Mammary epithelial cell (primary cell): ENCODE measurements at regions of chr10 and their contacts with region 1.

Region 1: DNA sequence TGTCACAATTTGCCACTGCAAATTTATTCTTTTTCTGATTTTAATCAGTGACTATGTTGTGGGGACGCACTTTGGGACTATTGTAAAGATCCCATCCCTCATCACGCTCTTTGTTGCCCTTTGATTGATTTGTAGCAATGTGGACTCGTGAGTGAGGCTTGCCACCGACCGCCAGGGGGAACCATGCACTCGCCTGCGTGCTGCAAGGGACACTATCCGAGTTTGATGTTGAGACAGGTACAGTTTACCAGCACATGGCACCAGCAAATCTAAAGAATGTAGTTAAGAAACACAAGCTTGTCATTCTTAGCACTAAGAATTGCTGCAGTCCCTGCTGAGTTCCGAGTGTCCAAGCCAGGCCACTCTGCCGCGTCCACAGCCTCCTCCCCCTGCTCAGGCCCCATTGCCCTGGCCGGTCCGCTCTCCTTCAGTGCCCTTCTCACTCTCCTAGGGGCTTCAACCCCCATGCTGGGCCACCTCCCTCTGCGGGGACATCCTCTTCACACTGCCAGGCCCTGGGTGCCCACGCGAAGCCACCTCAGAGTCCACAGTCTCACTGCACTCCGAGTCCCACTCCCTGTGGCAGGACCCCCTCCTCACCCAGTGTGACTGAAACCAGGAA is 2.0 kb upstream of the SFTPA2 start:
- DNase-seq: peak; percentile 27
- H3K4me3 ChIP-seq: no peak overlapping the region
- H3K27ac ChIP-seq: no peak overlapping the region
- H3K4me1 ChIP-seq: no peaks in the 10 kb centered on the region
- H3K27me3 ChIP-seq: peaks cover 1% of the 10 kb centered on the region
- CTCF ChIP-seq: peak; percentile 89 to 94

Region 2: GRCh38 chr10:79588800-79589199 is 26.6 kb after region 1 on chr10:
- CTCF ChIA-PET with region 1: no interaction called
- dilution Hi-C with region 1: no loop called
- in situ Hi-C with region 1: no loop called
- intact Hi-C with region 1: no loop called
- DNase-seq: no peak
- H3K4me3 ChIP-seq: no peak overlapping the region
- H3K27ac ChIP-seq: no peak overlapping the region
- H3K4me1 ChIP-seq: no peaks in the 10 kb centered on the region
- H3K27me3 ChIP-seq: no peaks in the 10 kb centered on the region
- CTCF ChIP-seq: no peak

Region 3: GRCh38 chr10:79929409-79929904 is 367.2 kb after region 1 on chr10:
- CTCF ChIA-PET with region 1: no interaction called
- dilution Hi-C with region 1: no loop called
- in situ Hi-C with region 1: loop called (anchors 10 kb)
- intact Hi-C with region 1: loop called (anchors 1 kb)
- DNase-seq: peak; percentile 54
- H3K4me3 ChIP-seq: no peak overlapping the region
- H3K27ac ChIP-seq: no peak overlapping the region
- H3K4me1 ChIP-seq: peaks cover 4% of the 10 kb centered on the region
- H3K27me3 ChIP-seq: peaks cover 10% of the 10 kb centered on the region
- CTCF ChIP-seq: peak; percentile 71 to 93

Region 4: GRCh38 chr10:79938728-79939406 is 376.6 kb after region 1 on chr10:
- CTCF ChIA-PET with region 1: no interaction called
- dilution Hi-C with region 1: no loop called
- in situ Hi-C with region 1: loop called (anchors 10 kb)
- intact Hi-C with region 1: no loop called
- DNase-seq: no peak
- H3K4me3 ChIP-seq: no peak overlapping the region
- H3K27ac ChIP-seq: no peak overlapping the region
- H3K4me1 ChIP-seq: no peaks in the 10 kb centered on the region
- H3K27me3 ChIP-seq: peaks cover 17% of the 10 kb centered on the region
- CTCF ChIP-seq: no peak

Region 5: DNA sequence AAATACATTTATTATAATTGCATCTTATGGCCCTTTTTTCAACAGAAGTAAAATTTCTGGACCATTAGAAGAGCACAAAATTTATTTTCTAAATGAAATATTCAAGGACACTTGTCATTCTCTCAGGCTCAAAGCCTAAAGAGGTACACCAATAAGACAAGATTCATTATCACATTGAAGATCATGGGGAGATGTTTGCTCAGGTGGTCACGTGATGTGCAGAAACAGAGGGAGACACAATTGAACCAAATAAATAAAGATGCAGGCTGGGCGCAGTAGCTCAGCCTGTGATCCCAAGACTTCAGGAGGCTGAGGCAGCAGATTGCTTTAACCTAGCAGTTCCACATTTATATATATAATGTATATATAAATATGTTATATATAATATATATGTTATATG is 463.0 kb after region 1 on chr10:
- CTCF ChIA-PET with region 1: no interaction called
- dilution Hi-C with region 1: no loop called
- in situ Hi-C with region 1: no loop called
- intact Hi-C with region 1: loop called (anchors 5 kb)
- DNase-seq: no peak
- H3K4me3 ChIP-seq: no peak overlapping the region
- H3K27ac ChIP-seq: no peak overlapping the region
- H3K4me1 ChIP-seq: no peaks in the 10 kb centered on the region
- H3K27me3 ChIP-seq: no peaks in the 10 kb centered on the region
- CTCF ChIP-seq: no peak

Region 6: GRCh38 chr10:80046629-80047441 is 484.6 kb after region 1 on chr10:
- CTCF ChIA-PET with region 1: no interaction called
- dilution Hi-C with region 1: no loop called
- in situ Hi-C with region 1: no loop called
- intact Hi-C with region 1: loop called (anchors 5 kb)
- DNase-seq: peak; percentile 40
- H3K4me3 ChIP-seq: no peak overlapping the region
- H3K27ac ChIP-seq: no peak overlapping the region
- H3K4me1 ChIP-seq: no peaks in the 10 kb centered on the region
- H3K27me3 ChIP-seq: no peaks in the 10 kb centered on the region
- CTCF ChIP-seq: peak; percentile 95 to 98